Common myeloid progenitor, CD34-positive (primary cell): ENCODE measurements at regions of chr3 and their contacts with region 1.

Region 1: DNA sequence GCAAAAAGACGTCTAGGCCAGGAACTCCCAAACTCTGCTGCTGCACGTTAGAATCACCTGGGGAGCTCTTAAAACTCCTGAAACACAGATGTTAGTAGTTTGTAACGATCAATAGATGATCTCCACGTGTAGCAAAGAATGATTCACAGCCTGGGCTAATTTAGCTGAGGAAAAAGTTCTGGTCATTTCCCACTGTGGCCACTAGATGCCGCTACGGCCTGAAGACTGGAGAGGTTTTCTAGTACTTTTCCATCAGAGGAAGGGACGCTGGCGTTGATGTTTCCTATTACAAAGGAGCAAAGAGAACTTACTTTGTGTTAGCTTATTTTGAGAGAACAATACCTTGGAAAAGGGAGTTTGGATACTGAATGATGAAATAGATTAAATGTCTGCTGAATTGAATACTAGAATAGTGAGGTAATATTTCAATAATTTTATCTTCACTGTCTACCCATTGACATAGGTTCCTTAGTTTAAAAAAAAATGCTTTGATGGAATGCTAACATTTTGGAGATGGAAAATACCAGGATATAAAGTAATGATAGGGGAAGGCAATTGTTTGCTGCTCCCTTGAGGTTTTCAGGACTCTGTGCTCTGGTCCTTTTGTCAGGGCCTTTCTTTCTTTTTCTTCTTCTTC is 159.1 kb downstream of the P3H2 start:
- DNase-seq: peak; percentile 68 to 85 (median 74)
- H3K4me3 ChIP-seq: no peak overlapping the region
- H3K27ac ChIP-seq: no peak overlapping the region
- H3K4me1 ChIP-seq: peaks cover 0 to 10% (median 1%) of the 10 kb centered on the region in 4 experiments
- H3K27me3 ChIP-seq: peaks cover 0 to 19% (median 2%) of the 10 kb centered on the region in 5 experiments

Region 2: GRCh38 chr3:189584645-189585044 is 377.0 kb before region 1 on chr3:
- CTCF ChIA-PET with region 1: no interaction called
- POLR2A ChIA-PET with region 1: no interaction called
- DNase-seq: no peak
- H3K4me3 ChIP-seq: no peak overlapping the region
- H3K27ac ChIP-seq: no peak overlapping the region
- H3K4me1 ChIP-seq: no peaks in the 10 kb centered on the region
- H3K27me3 ChIP-seq: peaks cover 0 to 4% (median 0%) of the 10 kb centered on the region in 5 experiments

Region 3: DNA sequence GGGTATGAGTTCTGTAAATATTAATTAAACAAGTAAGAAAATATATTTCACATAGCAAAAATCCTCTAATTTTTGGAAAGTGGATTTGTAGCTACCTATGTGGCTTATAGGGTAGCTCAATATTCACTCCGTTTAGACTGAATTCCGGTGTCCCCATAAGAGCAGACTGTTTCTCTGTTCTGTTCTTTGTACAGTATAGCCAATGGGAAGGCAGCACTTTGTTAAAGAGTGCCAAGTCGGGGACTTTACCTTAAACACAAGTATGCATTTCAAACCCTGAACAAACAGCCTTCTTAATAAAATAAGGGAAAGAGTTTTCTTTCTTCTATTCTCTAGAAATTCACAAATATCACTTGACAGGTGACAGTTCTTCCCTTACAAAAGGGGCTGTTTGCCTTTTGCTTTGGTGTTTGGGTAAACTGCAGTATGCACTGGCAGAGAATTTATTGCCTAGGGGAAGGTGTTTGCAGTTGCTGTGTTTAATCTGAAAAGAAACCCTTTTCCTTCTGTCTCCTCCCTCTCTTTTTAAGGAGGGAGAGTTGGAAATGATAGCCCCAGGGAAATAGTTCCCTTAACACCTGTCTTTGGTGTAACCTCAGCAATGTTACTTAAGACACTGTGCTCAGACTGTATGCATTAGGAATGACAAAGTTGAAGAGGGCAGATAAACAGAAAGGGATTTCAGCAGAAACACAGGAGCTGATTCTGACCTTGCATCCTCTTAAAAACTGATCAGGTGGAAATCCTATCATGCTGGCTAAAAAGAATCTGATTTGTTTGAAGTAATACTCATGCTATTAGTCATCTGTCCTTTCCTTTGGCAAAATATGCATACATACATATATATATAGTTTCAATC is 205.2 kb before region 1 on chr3:
- CTCF ChIA-PET with region 1: no interaction called
- POLR2A ChIA-PET with region 1: no interaction called
- DNase-seq: no peak
- H3K4me3 ChIP-seq: no peak overlapping the region
- H3K27ac ChIP-seq: no peak overlapping the region
- H3K4me1 ChIP-seq: no peaks in the 10 kb centered on the region
- H3K27me3 ChIP-seq: peaks cover 0 to 2% (median 0%) of the 10 kb centered on the region in 5 experiments

Region 4: DNA sequence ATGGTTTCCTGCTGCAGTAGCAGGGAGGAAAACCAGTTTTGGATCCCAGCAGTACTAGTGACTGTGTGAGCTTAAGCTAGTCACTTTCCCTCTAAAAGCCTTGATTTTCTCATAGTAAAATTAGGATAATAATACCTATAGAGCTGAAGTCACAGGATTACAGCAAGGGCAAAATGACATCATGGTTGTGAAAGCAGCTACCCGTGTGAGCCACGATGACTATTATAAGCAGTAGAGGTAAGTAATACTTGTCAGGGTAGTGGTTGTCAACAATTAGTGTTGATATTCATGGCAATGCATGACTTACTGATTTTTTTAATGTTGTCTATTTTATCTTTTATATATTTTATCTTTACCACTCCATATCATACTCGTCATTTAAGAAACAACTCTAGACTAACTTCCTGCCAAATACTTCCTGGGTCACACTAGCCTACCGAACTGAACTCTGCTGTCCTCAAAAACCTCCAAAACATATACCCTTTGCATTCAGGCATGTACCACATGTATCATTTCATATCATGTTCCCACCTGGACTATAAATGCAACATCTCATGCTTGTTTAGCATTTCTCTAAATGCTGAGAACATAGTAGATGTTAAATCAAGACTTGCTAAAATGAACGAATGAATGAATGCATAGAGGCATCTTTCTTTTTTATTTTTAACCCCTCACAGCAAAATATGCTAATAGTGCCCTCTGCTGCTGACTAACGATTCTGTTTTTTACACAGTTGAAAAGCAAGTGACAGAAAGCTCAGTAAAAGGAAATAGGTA is 13.5 kb before region 1 on chr3:
- CTCF ChIA-PET with region 1: interaction called, 14 read pairs
- POLR2A ChIA-PET with region 1: no interaction called
- DNase-seq: peak; percentile 28 to 51 (median 42)
- H3K4me3 ChIP-seq: no peak overlapping the region
- H3K27ac ChIP-seq: no peak overlapping the region
- H3K4me1 ChIP-seq: no peaks in the 10 kb centered on the region
- H3K27me3 ChIP-seq: peaks cover 0 to 13% (median 6%) of the 10 kb centered on the region in 5 experiments

Region 5: GRCh38 chr3:190101320-190102011 is 139.8 kb after region 1 on chr3:
- CTCF ChIA-PET with region 1: no interaction called
- POLR2A ChIA-PET with region 1: no interaction called
- DNase-seq: peak; percentile 46 to 82 (median 75)
- H3K4me3 ChIP-seq: peak overlapping the region in 5 of 7 experiments; percentile 23 to 64 (median 33)
- H3K27ac ChIP-seq: peak overlapping the region in 1 of 2 experiments; percentile 51
- H3K4me1 ChIP-seq: peaks cover 4 to 12% (median 9%) of the 10 kb centered on the region in 4 experiments
- H3K27me3 ChIP-seq: no peaks in the 10 kb centered on the region

Region 6: GRCh38 chr3:190120269-190121060 is 158.8 kb after region 1 on chr3 and contains the start of gene P3H2:
- CTCF ChIA-PET with region 1: interaction called, 20 read pairs
- POLR2A ChIA-PET with region 1: no interaction called
- DNase-seq: peak; percentile 78 to 91 (median 87)
- H3K4me3 ChIP-seq: peak within 1 kb of the TSS; percentile 30 to 79 (median 66)
- H3K27ac ChIP-seq: no peak within 1 kb of the TSS
- H3K4me1 ChIP-seq: peaks cover 0 to 18% (median 14%) of the 10 kb centered on the region in 4 experiments
- H3K27me3 ChIP-seq: peaks cover 5 to 42% (median 10%) of the 10 kb centered on the region in 5 experiments

Region 7: GRCh38 chr3:190321789-190322603 is 360.4 kb after region 1 on chr3 and contains the start of gene CLDN1:
- CTCF ChIA-PET with region 1: interaction called, 31 read pairs
- POLR2A ChIA-PET with region 1: no interaction called
- DNase-seq: peak; percentile 59 to 78 (median 76)
- H3K4me3 ChIP-seq: peak within 1 kb of the TSS; percentile 19 to 72 (median 45)
- H3K27ac ChIP-seq: no peak within 1 kb of the TSS
- H3K4me1 ChIP-seq: peaks cover 0 to 20% (median 17%) of the 10 kb centered on the region in 4 experiments
- H3K27me3 ChIP-seq: peaks cover 2 to 78% (median 19%) of the 10 kb centered on the region in 5 experiments